A673 (cell line): ENCODE measurements at regions of chr22 and their contacts with region 1.

Region 1: GRCh38 chr22:24768537-24769374 is 5.8 kb downstream of the PIWIL3 start:
- DNase-seq: peak; percentile 72
- H3K4me3 ChIP-seq: no peak overlapping the region
- H3K27ac ChIP-seq: no peak overlapping the region
- H3K4me1 ChIP-seq: no peaks in the 10 kb centered on the region
- H3K27me3 ChIP-seq: no peaks in the 10 kb centered on the region
- CTCF ChIP-seq: peak; percentile 83

Region 2: GRCh38 chr22:24845041-24845898 is 76.5 kb after region 1 on chr22:
- CTCF ChIA-PET with region 1: interaction called, 16 read pairs
- POLR2A ChIA-PET with region 1: no interaction called
- intact Hi-C with region 1: loop called (anchors 2 kb)
- DNase-seq: no peak
- H3K4me3 ChIP-seq: no peak overlapping the region
- H3K27ac ChIP-seq: no peak overlapping the region
- H3K4me1 ChIP-seq: no peaks in the 10 kb centered on the region
- H3K27me3 ChIP-seq: no peaks in the 10 kb centered on the region
- CTCF ChIP-seq: no peak